ENCODE measurements at regions of chr3 and their contacts with region 1.

Region 1: GRCh38 chr3:116809208-116809607 is 99.6 kb downstream of the TUSC7 start:
- DNase-seq: no peak
- ATAC-seq: no peak
- H3K4me3 ChIP-seq: no peak overlapping the region
- H3K4me3 Mint-ChIP-seq: no peak overlapping the region
- H3K27ac ChIP-seq: no peak overlapping the region
- H3K27ac Mint-ChIP-seq: no peak overlapping the region
- H3K4me1 ChIP-seq: no peaks in the 10 kb centered on the region
- H3K4me1 Mint-ChIP-seq: no peaks in the 10 kb centered on the region
- H3K27me3 ChIP-seq: no peaks in the 10 kb centered on the region
- H3K27me3 Mint-ChIP-seq: no peaks in the 10 kb centered on the region

Region 2: DNA sequence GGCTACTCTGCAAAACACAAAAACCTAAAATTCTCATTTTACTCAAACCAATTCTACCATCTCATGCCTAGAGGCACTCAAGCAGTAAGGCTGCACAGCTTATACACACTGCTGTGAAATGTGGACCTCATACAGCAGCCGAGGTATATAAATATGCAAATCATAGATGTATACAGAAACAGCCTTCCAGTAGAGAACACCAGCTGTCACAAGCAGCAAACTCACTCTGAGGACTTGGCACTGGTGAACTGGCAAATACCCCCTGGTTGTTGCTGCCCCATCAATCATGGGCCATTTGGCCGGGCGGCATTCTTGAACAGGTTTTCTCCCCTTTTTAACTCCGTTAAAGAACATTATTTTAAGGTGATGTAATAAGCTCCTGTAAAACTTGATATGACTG is 741.9 kb before region 1 on chr3:
- CTCF ChIA-PET with region 1: interaction called in 1 of 2 experiments, 10 read pairs
- POLR2A ChIA-PET with region 1: no interaction called
- DNase-seq: no peak
- ATAC-seq: no peak
- H3K4me3 ChIP-seq: no peak overlapping the region
- H3K4me3 Mint-ChIP-seq: no peak overlapping the region
- H3K27ac ChIP-seq: no peak overlapping the region
- H3K27ac Mint-ChIP-seq: no peak overlapping the region
- H3K4me1 ChIP-seq: no peaks in the 10 kb centered on the region
- H3K4me1 Mint-ChIP-seq: no peaks in the 10 kb centered on the region
- H3K27me3 ChIP-seq: no peaks in the 10 kb centered on the region
- H3K27me3 Mint-ChIP-seq: no peaks in the 10 kb centered on the region

Region 3: DNA sequence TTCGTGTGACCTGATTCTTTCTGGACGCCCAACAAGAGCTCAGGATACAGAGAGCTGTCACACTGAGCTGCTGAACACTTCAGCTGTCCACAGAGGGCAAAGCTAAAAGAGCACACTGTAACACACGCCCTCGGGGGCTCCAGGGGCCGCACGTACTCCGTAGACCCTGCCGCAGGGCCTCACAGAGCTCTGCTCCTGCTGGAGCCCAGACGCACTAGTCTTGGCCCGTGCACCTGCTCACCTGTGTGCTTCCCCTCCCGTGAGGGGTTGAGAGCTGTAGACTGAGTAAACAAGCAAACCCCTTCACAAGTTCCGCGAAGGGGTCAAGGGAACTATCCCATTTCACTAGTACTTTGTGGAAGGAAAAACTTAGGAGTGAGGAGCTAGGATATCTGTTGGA is 130.4 kb before region 1 on chr3:
- CTCF ChIA-PET with region 1: interaction called in 1 of 2 experiments, 10 read pairs
- POLR2A ChIA-PET with region 1: no interaction called
- DNase-seq: no peak
- ATAC-seq: no peak
- H3K4me3 ChIP-seq: no peak overlapping the region
- H3K4me3 Mint-ChIP-seq: no peak overlapping the region
- H3K27ac ChIP-seq: no peak overlapping the region
- H3K27ac Mint-ChIP-seq: no peak overlapping the region
- H3K4me1 ChIP-seq: no peaks in the 10 kb centered on the region
- H3K4me1 Mint-ChIP-seq: no peaks in the 10 kb centered on the region
- H3K27me3 ChIP-seq: no peaks in the 10 kb centered on the region
- H3K27me3 Mint-ChIP-seq: no peaks in the 10 kb centered on the region

Region 4: GRCh38 chr3:116877968-116878367 is 68.8 kb after region 1 on chr3:
- CTCF ChIA-PET with region 1: no interaction called
- POLR2A ChIA-PET with region 1: no interaction called
- DNase-seq: no peak
- ATAC-seq: no peak
- H3K4me3 ChIP-seq: no peak overlapping the region
- H3K4me3 Mint-ChIP-seq: no peak overlapping the region
- H3K27ac ChIP-seq: no peak overlapping the region
- H3K27ac Mint-ChIP-seq: no peak overlapping the region
- H3K4me1 ChIP-seq: no peaks in the 10 kb centered on the region
- H3K4me1 Mint-ChIP-seq: no peaks in the 10 kb centered on the region
- H3K27me3 ChIP-seq: no peaks in the 10 kb centered on the region
- H3K27me3 Mint-ChIP-seq: no peaks in the 10 kb centered on the region

Measured in T-cell (primary cell).